Endothelial cell of umbilical vein (primary cell): ENCODE measurements at regions of chr10 and their contacts with region 1.

Region 1: DNA sequence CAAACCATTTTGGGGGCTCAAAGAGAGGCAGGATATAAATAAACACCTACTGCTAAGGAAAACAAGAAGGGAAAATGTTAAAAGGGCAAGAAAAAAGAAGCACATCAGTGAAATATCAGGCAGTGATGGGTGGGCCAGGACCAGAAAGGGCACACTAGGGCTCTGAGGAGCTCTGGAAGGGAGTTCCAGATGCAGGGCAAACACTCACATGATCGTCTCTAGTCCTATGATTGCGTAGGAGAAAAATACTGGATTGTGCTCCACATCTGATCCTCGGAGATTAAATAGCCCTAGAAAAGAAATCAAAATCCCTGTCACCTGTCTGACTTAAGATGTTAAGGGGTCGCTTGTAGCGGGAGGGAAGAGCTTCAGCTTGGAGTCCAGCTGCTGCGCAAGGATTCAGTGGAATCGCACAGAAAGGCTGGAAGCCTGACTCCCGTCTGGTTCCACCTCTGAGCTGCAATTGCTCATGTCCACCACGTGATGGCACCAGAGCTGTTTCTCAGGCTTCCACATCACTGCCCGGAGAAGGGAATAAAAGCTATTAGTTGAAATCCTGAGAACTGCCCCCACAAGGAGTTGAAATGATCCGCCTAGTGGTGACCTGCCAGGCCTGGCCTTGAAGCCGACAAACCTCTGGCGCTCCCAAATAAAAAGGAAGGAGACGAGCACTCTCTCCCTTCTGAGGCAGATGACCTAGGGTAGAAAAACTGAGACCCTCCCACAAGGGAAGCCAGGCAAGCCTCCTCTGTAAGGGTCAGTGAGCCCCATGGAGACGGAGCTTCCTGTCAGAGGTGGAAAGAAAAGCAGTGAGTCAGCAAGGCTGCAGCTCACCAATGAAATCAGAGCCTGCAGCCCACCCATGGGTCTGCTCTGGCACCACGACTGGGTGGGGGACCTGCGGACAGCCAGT is 39.2 kb downstream of the XPNPEP1 start:
- DNase-seq: peak; percentile 93
- H3K4me3 ChIP-seq: no peak overlapping the region
- H3K27ac ChIP-seq: peak overlapping the region; percentile 68
- H3K4me1 ChIP-seq: peaks cover 10% of the 10 kb centered on the region
- H3K27me3 ChIP-seq: no peaks in the 10 kb centered on the region
- CTCF ChIP-seq: peak; percentile 92 to 97
- POLR2A ChIP-seq: no peak

Region 2: DNA sequence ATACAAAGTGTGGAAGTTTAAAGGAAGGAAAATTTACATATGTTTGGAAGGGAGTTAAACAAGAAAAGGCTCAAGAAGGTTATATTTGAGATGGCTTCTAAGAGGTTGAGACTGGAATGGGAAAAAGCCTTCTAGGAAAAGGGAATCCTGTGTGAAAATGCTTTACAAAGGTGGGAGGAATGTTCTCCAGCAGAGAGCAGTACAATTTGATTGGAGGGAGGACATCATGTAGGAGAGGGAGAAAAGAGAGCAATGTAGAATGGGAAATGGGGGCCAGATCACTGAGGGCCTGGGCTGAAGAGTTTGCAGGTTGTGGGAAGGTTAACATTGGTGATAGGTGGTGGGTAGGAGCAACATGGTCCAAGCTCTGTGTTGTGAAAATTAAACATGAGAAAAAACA is 327.7 kb before region 1 on chr10:
- CTCF ChIA-PET with region 1: no interaction called
- POLR2A ChIA-PET with region 1: no interaction called
- dilution Hi-C with region 1: no loop called
- intact Hi-C with region 1: no loop called
- DNase-seq: no peak
- H3K4me3 ChIP-seq: no peak overlapping the region
- H3K27ac ChIP-seq: no peak overlapping the region
- H3K4me1 ChIP-seq: no peaks in the 10 kb centered on the region
- H3K27me3 ChIP-seq: no peaks in the 10 kb centered on the region
- CTCF ChIP-seq: no peak
- POLR2A ChIP-seq: no peak

Region 3: GRCh38 chr10:109647627-109648026 is 236.5 kb before region 1 on chr10:
- CTCF ChIA-PET with region 1: no interaction called
- POLR2A ChIA-PET with region 1: no interaction called
- dilution Hi-C with region 1: no loop called
- intact Hi-C with region 1: no loop called
- DNase-seq: no peak
- H3K4me3 ChIP-seq: no peak overlapping the region
- H3K27ac ChIP-seq: no peak overlapping the region
- H3K4me1 ChIP-seq: no peaks in the 10 kb centered on the region
- H3K27me3 ChIP-seq: no peaks in the 10 kb centered on the region
- CTCF ChIP-seq: no peak
- POLR2A ChIP-seq: no peak

Region 4: DNA sequence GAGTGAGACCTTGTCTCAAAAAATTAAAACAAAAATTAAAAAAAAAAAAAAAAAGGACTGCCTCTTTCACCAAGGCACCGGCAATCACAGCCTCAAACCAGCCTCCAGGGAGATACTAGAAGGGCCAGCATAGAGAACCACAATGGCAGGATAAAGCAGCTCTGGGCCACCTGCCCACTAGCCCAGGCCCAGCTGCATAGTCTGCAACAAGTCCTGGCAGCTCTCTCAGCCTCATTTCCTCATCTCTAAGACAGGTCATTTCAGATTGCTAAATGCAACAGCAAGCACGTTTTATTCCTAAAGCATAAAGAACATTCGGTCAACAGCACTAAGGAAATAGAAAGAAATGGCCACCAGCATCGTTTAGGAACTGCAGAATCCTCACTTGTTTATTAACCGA is 10.4 kb after region 1 on chr10:
- CTCF ChIA-PET with region 1: interaction called, 68 read pairs
- POLR2A ChIA-PET with region 1: no interaction called
- dilution Hi-C with region 1: no loop called
- intact Hi-C with region 1: no loop called
- DNase-seq: peak; percentile 80
- H3K4me3 ChIP-seq: no peak overlapping the region
- H3K27ac ChIP-seq: no peak overlapping the region
- H3K4me1 ChIP-seq: peaks cover 21% of the 10 kb centered on the region
- H3K27me3 ChIP-seq: no peaks in the 10 kb centered on the region
- CTCF ChIP-seq: no peak
- POLR2A ChIP-seq: no peak

Region 5: DNA sequence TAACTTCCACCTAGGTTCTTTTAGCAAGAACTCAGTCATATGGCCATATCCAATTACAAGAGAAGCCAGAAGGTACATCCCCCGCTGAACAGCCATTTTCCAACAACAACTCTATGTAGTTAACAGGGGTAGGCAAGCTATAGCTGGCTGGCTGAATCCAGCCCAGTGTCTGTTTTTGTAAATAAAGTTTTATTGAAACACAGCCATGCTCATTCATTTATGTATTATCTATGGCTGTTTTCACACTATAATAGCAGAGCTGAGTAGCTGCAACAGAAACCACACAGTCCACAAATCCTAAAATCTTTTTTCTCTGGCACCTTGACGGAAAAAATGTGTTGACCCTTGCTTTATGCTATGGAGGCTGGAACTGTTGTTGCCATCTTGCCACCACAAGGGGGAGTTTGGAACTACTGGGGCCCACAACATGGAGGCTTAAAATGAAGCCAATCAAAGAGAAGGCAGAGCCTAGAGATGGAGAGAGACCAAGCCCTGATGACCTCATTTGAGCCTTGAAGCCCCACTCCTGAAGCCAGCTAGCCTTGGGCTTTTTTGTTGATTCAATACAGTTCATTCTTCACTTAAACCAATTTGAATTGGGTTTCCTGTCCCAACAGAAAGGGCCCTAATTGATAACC is 72.5 kb after region 1 on chr10:
- CTCF ChIA-PET with region 1: interaction called, 18 read pairs
- POLR2A ChIA-PET with region 1: no interaction called
- dilution Hi-C with region 1: no loop called
- intact Hi-C with region 1: loop called (anchors 1 kb)
- DNase-seq: peak; percentile 41
- H3K4me3 ChIP-seq: no peak overlapping the region
- H3K27ac ChIP-seq: no peak overlapping the region
- H3K4me1 ChIP-seq: no peaks in the 10 kb centered on the region
- H3K27me3 ChIP-seq: peaks cover 0 to 2% of the 10 kb centered on the region in 2 experiments
- CTCF ChIP-seq: peak; percentile 55 to 70
- POLR2A ChIP-seq: no peak

Region 6: DNA sequence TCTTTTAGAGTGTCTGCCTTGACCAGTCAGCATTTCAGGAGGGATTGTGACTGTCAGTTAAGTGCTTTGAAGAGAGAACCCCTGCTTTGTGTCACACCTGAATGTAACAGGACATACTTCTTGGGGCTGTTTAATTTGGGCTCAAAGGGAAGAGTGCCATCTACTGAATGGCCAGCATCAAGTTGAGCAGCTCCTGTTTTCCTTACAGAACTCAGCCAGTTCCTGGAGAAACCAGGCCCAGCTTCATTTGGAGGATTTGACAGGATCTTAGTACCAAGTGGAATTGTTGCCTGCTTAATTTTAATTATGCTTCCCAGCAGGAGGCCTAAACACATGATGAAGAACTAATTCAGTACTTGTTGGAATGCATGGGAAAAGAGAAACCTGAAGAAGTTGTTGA is 131.9 kb after region 1 on chr10:
- CTCF ChIA-PET with region 1: interaction called, 38 read pairs
- POLR2A ChIA-PET with region 1: no interaction called
- dilution Hi-C with region 1: no loop called
- intact Hi-C with region 1: no loop called
- DNase-seq: peak; percentile 45
- H3K4me3 ChIP-seq: no peak overlapping the region
- H3K27ac ChIP-seq: no peak overlapping the region
- H3K4me1 ChIP-seq: no peaks in the 10 kb centered on the region
- H3K27me3 ChIP-seq: no peaks in the 10 kb centered on the region
- CTCF ChIP-seq: peak in 1 of 2 donors; percentile 5
- POLR2A ChIP-seq: no peak

Region 7: GRCh38 chr10:110081911-110082310 is 197.8 kb after region 1 on chr10:
- CTCF ChIA-PET with region 1: interaction called, 46 read pairs
- POLR2A ChIA-PET with region 1: no interaction called
- dilution Hi-C with region 1: no loop called
- intact Hi-C with region 1: no loop called
- DNase-seq: peak; percentile 97
- H3K4me3 ChIP-seq: no peak overlapping the region
- H3K27ac ChIP-seq: peak overlapping the region; percentile 90
- H3K4me1 ChIP-seq: peaks cover 41% of the 10 kb centered on the region
- H3K27me3 ChIP-seq: no peaks in the 10 kb centered on the region
- CTCF ChIP-seq: no peak
- POLR2A ChIP-seq: peak; percentile 70

Region 8: GRCh38 chr10:110144507-110144906 is 260.4 kb after region 1 on chr10:
- CTCF ChIA-PET with region 1: interaction called, 58 read pairs
- POLR2A ChIA-PET with region 1: no interaction called
- dilution Hi-C with region 1: no loop called
- intact Hi-C with region 1: no loop called
- DNase-seq: no peak
- H3K4me3 ChIP-seq: no peak overlapping the region
- H3K27ac ChIP-seq: no peak overlapping the region
- H3K4me1 ChIP-seq: peaks cover 14% of the 10 kb centered on the region
- H3K27me3 ChIP-seq: peaks cover 11 to 33% of the 10 kb centered on the region in 2 experiments
- CTCF ChIP-seq: no peak
- POLR2A ChIP-seq: no peak

Region 9: GRCh38 chr10:110304780-110305421 is 420.8 kb after region 1 on chr10 and contains the start of gene SMNDC1:
- CTCF ChIA-PET with region 1: interaction called, 10 read pairs
- POLR2A ChIA-PET with region 1: no interaction called
- dilution Hi-C with region 1: no loop called
- intact Hi-C with region 1: no loop called
- DNase-seq: peak; percentile 99
- H3K4me3 ChIP-seq: peak within 1 kb of the TSS; percentile 95 to 99 (median 99)
- H3K27ac ChIP-seq: peak within 1 kb of the TSS; percentile 97
- H3K4me1 ChIP-seq: peaks cover 47% of the 10 kb centered on the region
- H3K27me3 ChIP-seq: no peaks in the 10 kb centered on the region
- CTCF ChIP-seq: no peak
- POLR2A ChIP-seq: peak; percentile 51
- total RNA-seq, gene SMNDC1: 38.5 and 39.3 TPM in 2 replicates